MCF 10A (cell line): ENCODE measurements at regions of chr5 and their contacts with region 1.

Region 1: GRCh38 chr5:172795318-172795977 is 24.5 kb upstream of the DUSP1 start:
- DNase-seq: peak; percentile 96
- H3K4me3 Mint-ChIP-seq: peak overlapping the region; percentile 21
- H3K27ac Mint-ChIP-seq: peak overlapping the region; percentile 79
- H3K4me1 Mint-ChIP-seq: peaks cover 50% of the 10 kb centered on the region
- H3K27me3 Mint-ChIP-seq: no peaks in the 10 kb centered on the region
- CTCF ChIP-seq: no peak

Region 2: DNA sequence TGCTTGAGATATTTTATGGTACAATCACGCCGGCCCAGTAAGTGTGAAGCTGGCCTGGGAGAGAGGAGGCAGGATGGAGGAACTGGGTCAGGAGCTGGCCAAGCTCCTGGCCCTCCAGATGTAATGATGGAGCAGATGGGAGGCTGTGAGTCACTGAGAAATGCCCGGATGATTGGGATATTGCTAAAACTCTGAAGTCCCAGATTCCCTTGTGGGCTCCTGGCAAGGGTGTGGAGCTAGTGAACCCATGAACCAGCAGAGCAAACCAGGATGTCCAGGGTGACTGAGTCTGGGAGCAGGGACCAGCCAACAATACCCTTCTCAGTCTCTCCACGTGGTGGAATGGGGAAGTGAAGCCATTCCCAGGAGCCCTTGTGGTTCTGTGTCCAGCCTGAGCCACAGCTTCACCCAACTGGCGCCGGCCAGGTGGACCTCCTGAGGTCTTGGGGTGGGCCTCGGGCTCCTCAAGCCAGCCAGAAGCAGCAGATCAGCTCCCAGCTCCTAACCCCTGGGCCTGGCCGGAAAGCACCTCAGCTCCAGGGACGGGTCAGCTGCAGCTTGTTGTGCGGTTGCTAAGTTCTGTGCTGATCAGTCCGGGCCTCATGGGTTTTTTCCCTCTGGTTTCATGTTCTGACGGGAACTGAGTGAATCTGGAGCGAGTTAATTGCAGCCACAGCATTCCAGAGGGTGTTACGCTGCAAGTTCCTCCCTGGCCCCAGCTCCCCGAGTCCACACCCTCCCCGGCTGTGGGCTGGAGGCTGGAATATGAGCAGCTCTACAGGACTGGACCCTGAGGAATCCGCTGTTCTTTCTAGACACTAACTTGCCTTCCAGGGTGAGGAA is 62.1 kb before region 1 on chr5:
- CTCF ChIA-PET with region 1: interaction called, 3 read pairs
- POLR2A ChIA-PET with region 1: interaction called, 13 read pairs
- intact Hi-C with region 1: no loop called
- DNase-seq: peak; percentile 93
- H3K4me3 Mint-ChIP-seq: peak overlapping the region; percentile 63
- H3K27ac Mint-ChIP-seq: peak overlapping the region; percentile 99
- H3K4me1 Mint-ChIP-seq: peaks cover 44% of the 10 kb centered on the region
- H3K27me3 Mint-ChIP-seq: no peaks in the 10 kb centered on the region
- CTCF ChIP-seq: peak; percentile 18

Region 3: DNA sequence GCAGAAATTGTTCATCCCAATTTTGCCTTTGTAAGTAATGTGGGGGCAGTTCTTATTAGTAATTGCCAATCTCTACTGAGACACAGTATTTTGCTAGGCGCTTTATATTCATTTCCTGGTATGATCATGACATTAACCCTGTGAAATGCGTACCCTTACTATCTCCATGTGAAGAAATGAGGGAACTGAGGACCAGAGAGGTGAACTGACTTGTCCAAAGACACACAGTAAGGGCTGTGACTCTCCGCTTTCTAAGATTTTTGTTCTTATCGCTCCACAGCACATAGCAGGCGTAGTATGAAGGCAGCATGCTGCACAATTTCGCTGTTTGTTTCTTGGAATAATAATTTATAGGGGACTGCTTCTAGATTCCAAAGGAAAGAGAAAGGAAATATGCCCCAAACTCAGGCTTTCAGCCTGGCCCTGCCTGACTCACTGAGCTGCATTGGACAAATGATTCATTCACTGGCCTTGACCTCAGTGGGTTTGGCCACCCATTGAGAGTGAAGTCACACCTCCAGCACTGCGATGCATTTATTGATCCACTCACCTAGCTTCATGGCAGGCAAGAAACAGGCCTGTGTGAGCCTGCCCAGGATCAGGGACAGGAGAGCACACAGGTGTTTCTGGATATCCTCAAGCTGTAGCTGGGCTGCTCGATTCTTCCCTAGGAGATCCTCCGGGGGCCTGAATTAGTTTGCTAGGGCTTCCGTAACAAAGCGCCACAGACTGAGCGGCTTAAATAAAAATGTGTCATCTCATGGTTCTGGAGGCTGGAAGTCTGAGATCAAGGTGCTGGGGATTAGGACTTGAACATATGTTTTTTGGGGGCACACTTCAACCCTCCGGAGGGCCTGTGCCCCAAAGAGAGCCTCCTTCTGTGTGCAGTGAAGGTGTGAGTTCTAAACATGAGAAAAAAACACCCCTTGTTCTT is 17.3 kb before region 1 on chr5:
- CTCF ChIA-PET with region 1: interaction called, 52 read pairs
- POLR2A ChIA-PET with region 1: interaction called, 1,263 read pairs
- intact Hi-C with region 1: loop called (anchors 1 kb)
- DNase-seq: peak; percentile 97
- H3K4me3 Mint-ChIP-seq: peak overlapping the region; percentile 69
- H3K27ac Mint-ChIP-seq: peak overlapping the region; percentile 99
- H3K4me1 Mint-ChIP-seq: peaks cover 70% of the 10 kb centered on the region
- H3K27me3 Mint-ChIP-seq: no peaks in the 10 kb centered on the region
- CTCF ChIP-seq: no peak

Region 4: DNA sequence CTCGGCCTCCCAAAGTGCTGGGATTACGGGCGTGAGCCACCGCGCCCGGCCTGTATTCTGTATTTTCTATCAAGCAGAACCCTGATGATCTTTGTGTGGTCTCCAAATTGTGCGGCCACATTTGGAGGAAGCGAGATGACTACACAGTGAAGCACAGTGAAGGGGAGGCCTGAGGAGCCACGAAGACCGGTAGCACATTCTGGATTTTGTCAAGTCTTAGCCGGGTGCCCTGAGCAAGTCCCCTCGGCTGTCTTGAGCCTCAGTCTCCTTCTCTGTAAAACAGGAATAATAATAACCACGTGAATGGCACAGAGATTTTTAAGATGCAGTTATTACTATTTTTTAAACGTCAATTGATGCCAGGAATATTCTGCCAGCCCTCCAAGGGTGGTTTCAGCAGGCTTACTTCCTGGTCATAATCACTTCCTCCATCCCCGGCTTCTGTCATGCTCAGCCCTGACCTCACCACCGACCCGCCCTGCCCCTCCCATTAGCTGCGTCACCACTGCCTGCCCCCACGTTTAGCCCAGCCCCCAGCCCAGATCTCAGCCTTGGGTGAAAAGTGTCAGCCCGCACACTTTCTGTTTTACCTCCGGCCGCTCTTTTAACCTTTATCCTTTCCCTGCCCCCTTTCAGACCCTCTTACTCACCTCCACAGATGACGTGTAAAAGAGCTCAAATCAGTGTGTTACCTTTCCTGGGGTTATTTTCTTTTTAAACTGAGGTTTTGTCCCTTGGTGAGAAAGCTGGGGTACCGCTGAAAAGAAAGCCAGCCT is 11.6 kb after region 1 on chr5:
- CTCF ChIA-PET with region 1: interaction called, 5 read pairs
- POLR2A ChIA-PET with region 1: interaction called, 10 read pairs
- intact Hi-C with region 1: no loop called
- DNase-seq: peak; percentile 95
- H3K4me3 Mint-ChIP-seq: peak overlapping the region; percentile 61
- H3K27ac Mint-ChIP-seq: peak overlapping the region; percentile 90
- H3K4me1 Mint-ChIP-seq: peaks cover 23% of the 10 kb centered on the region
- H3K27me3 Mint-ChIP-seq: no peaks in the 10 kb centered on the region
- CTCF ChIP-seq: no peak

Region 5: DNA sequence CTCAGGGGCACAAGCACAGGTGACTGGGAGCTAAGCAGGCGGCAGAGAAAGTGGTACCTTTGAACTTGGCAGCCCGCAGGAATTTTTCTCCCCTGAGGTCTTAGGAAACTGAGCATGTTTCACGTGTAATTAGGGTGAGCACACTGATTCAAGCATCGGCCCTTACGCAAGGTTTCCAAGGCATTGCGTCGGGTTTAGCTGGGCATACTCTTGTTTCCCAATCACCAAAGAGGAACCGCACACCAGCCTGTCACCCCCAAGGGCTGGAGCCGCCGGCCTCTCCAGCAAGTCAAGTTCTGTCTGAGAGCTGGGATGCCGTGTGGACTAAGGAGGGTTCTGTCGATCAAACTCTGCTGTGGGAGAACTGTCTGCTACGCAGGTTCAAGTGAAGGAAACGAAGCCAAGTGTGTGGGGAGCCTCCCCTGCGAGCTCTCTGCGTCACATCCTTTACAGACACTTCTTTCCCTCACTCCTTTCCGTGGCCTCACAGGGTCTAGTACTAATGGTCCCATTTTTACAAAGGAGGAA is 91.6 kb after region 1 on chr5:
- CTCF ChIA-PET with region 1: no interaction called
- POLR2A ChIA-PET with region 1: interaction called, 12 read pairs
- intact Hi-C with region 1: no loop called
- DNase-seq: peak; percentile 100
- H3K4me3 Mint-ChIP-seq: peak overlapping the region; percentile 61
- H3K27ac Mint-ChIP-seq: peak overlapping the region; percentile 98
- H3K4me1 Mint-ChIP-seq: peaks cover 46% of the 10 kb centered on the region
- H3K27me3 Mint-ChIP-seq: no peaks in the 10 kb centered on the region
- CTCF ChIP-seq: no peak

Region 6: GRCh38 chr5:172897481-172898217 is 102.2 kb after region 1 on chr5:
- CTCF ChIA-PET with region 1: interaction called, 5 read pairs
- POLR2A ChIA-PET with region 1: interaction called, 49 read pairs
- intact Hi-C with region 1: no loop called
- DNase-seq: peak; percentile 63
- H3K4me3 Mint-ChIP-seq: no peak overlapping the region
- H3K27ac Mint-ChIP-seq: peak overlapping the region; percentile 98
- H3K4me1 Mint-ChIP-seq: peaks cover 70% of the 10 kb centered on the region
- H3K27me3 Mint-ChIP-seq: no peaks in the 10 kb centered on the region
- CTCF ChIP-seq: no peak